ENCODE measurements at regions of chr11 and their contacts with region 1.

Region 1: DNA sequence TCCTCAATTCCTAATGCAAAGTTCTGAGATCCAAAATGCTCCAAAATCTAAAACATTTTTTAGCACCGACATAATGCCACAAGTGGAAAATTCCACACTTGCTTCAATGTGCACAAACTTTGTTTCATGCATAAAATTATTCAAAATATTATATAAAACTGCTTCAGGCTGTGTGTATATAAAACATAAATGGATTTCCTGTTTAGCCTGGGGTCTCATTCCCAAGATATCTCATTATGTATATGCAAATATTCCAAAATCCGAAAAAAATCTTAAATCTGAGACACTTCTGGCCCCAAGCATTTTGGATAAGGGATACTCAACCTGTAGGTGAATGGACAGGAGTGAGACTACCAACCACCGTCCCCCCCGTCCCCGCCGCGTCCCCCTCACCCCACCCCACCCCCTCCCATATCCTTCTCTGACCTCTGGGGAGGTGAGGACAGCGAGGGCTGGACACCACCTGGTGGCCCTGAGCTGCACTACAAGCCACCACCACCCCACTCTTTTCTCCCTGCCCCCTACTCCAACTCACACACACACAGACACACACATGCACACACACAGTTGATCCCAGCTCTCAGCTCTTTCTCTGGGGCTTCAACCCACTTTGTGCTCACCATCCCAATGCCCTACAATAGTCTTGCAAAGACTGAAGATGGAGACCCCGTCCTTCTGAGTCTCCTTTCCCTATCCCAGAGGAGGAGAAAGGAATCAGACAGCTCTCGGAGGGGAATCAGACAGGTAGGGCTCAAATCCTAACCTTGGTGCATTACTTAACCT is 101.0 kb downstream of the PDE2A start:
- DNase-seq: peak; percentile 70
- ATAC-seq: peak; percentile 82
- H3K4me3 ChIP-seq: no peak overlapping the region
- H3K27ac ChIP-seq: no peak overlapping the region
- H3K4me1 ChIP-seq: no peaks in the 10 kb centered on the region
- H3K27me3 ChIP-seq: no peaks in the 10 kb centered on the region
- CTCF ChIP-seq: peak; percentile 54

Region 2: GRCh38 chr11:72278911-72279310 is 294.4 kb before region 1 on chr11:
- intact Hi-C with region 1: no loop called
- DNase-seq: no peak
- ATAC-seq: no peak
- H3K4me3 ChIP-seq: no peak overlapping the region
- H3K27ac ChIP-seq: no peak overlapping the region
- H3K4me1 ChIP-seq: no peaks in the 10 kb centered on the region
- H3K27me3 ChIP-seq: no peaks in the 10 kb centered on the region
- CTCF ChIP-seq: no peak

Region 3: DNA sequence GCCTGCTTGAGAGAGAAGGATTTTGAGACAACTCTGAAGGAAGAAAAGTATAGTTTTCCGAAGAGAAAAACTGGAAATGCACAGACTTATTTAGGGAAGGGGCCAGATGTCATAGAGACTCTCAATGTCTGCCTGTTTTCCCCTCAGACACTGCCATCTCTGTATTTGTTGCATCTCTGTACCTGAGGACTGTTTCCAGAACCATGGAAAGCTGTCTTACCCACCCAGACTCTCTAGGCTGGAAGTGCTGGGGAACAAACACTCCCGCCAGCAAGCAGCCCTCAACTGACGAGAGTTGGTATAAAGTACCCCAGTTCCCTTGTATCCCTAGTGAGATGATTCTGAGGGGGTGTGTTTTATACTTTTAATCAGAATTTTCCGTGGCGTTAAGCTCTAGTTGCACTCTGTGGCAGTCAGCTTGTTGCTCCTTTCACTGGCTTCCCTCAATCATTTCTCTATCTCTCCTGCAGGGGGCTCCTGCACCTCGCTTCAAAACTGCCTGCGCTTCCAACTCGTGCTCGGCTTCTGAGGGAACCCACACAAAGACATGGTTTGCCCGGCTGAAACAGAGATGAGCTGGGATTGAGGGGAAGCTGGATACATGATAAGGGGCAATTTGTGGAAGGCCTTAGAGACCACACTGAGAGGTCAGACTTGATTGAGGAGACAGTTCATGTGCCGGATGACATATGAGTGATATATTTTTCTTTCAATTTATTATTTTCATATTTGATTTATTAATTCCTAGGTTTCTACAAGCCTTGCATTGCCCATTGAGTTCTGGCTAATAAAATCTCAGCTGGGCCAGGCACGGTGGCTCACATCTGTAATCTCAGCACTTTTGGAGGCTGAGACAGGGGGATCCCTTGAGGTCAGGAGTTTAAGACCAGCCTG is 102.0 kb before region 1 on chr11:
- intact Hi-C with region 1: loop called (anchors 10 kb)
- DNase-seq: peak; percentile 69
- ATAC-seq: peak; percentile 97
- H3K4me3 ChIP-seq: no peak overlapping the region
- H3K27ac ChIP-seq: no peak overlapping the region
- H3K4me1 ChIP-seq: peaks cover 5% of the 10 kb centered on the region
- H3K27me3 ChIP-seq: peaks cover 22% of the 10 kb centered on the region
- CTCF ChIP-seq: peak; percentile 83